ENCODE measurements at regions of chr3 and their contacts with region 1.

Region 1: DNA sequence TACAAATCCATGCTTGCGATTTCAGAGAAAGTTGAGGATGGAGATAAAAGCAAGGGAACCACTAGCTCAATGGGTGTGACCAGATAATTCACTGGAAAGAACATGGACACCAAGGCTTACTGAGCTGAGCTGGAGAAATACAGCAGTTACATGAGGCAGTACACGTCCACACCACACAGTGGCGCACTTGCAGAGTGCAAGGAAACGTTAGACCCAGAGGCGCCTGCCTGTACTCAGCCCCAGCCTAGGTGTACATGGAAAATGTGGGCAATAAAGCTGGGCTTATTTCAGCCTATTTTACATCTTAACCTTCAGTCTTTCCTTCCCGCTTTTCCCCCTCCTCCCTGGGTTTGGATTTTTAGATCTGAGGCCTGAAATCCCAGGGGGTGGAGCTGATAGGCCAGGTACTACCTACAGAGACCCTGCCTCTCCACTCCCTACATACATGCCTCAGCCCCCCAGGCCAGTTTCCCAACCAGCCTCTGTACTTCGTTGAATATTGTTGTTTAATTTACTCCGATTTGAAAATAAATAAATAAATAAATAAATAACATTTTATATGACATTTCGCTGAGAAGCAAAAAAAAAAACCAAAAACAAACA is 60.1 kb downstream of the PCOLCE2 start:
- DNase-seq: peak; percentile 85
- H3K4me3 Mint-ChIP-seq: no peak overlapping the region
- H3K27ac Mint-ChIP-seq: no peak overlapping the region
- H3K4me1 Mint-ChIP-seq: no peaks in the 10 kb centered on the region
- H3K27me3 Mint-ChIP-seq: peaks cover 13% of the 10 kb centered on the region

Region 2: DNA sequence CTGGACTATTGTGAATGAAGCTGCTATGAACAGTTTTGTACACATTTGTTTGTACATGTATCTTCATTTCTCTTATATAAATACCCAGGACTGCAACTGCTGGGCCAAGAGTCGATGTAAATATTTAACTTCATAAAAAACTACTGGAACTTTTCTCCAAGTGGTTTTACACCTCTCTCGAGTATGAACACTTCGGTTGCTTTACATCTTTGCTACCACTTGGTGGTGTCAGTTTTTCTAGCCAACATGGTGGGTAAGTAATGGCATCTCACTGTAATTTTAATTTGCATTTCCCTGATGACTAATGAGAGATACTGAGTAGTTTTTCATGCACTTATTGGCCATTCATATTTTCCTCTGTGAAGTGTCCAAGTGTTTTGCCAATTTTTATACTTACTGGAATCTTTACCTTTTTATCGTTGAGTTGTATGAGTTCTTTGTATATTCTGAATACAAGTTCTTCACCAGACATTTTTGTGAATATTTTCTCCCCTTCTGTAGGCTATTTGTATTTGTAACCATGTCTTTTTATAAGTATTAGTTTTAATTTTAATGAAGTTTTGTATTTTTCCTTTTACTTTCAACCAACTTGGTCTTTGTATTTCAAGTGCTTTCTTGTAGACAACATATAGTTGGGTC is 15.7 kb after region 1 on chr3:
- CTCF ChIA-PET with region 1: interaction called, 15 read pairs
- POLR2A ChIA-PET with region 1: no interaction called
- intact Hi-C with region 1: no loop called
- DNase-seq: no peak
- H3K4me3 Mint-ChIP-seq: no peak overlapping the region
- H3K27ac Mint-ChIP-seq: no peak overlapping the region
- H3K4me1 Mint-ChIP-seq: no peaks in the 10 kb centered on the region
- H3K27me3 Mint-ChIP-seq: peaks cover 4% of the 10 kb centered on the region

Region 3: GRCh38 chr3:142857056-142857455 is 28.3 kb after region 1 on chr3:
- CTCF ChIA-PET with region 1: interaction called, 15 read pairs
- POLR2A ChIA-PET with region 1: interaction called, 3 read pairs
- intact Hi-C with region 1: no loop called
- DNase-seq: no peak
- H3K4me3 Mint-ChIP-seq: no peak overlapping the region
- H3K27ac Mint-ChIP-seq: no peak overlapping the region
- H3K4me1 Mint-ChIP-seq: no peaks in the 10 kb centered on the region
- H3K27me3 Mint-ChIP-seq: peaks cover 16% of the 10 kb centered on the region

Region 4: GRCh38 chr3:142987080-142987700 is 158.4 kb after region 1 on chr3:
- CTCF ChIA-PET with region 1: interaction called, 27 read pairs
- POLR2A ChIA-PET with region 1: no interaction called
- intact Hi-C with region 1: loop called (anchors 1 kb)
- DNase-seq: no peak
- H3K4me3 Mint-ChIP-seq: no peak overlapping the region
- H3K27ac Mint-ChIP-seq: no peak overlapping the region
- H3K4me1 Mint-ChIP-seq: no peaks in the 10 kb centered on the region
- H3K27me3 Mint-ChIP-seq: peaks cover 10% of the 10 kb centered on the region

Region 5: DNA sequence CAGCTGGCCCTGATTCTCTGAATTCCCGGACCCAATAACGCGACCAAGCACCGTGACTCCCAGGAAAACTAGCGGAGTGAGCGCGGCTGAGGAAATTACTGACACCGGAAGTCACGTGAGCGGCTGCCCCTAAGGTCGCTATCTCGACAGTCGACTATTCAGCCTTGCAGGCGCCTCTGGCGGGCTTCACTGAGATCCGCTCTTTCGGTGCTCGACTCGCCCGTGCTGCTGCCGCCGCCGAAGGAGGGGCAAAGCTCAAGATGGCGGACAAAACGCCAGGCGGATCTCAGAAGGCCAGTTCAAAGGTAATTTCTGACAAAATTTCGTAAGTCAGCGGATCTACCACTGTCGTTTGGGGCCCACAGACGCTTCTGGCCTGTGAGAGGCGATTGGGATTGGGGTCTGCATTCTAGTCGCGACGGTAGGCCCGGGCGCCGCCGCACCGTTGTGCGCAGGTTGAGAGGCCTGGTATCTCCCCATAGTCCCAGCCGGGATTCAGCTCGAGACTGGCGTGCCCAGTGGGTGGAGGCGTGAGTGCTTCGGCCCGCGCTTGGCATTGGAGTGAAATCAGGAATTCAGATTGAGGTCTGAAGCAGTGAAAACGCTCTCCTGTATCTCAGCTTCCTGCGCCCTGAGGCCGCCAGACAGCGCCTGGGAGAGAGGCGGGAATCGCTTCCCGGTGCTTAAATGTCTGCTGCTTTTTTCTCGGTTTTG is 172.7 kb after region 1 on chr3 and contains the start of gene U2SURP:
- CTCF ChIA-PET with region 1: interaction called, 15 read pairs
- POLR2A ChIA-PET with region 1: interaction called, 3 read pairs
- intact Hi-C with region 1: no loop called
- DNase-seq: peak; percentile 95
- H3K4me3 Mint-ChIP-seq: peak within 1 kb of the TSS; percentile 88
- H3K27ac Mint-ChIP-seq: peak within 1 kb of the TSS; percentile 96
- H3K4me1 Mint-ChIP-seq: peaks cover 34% of the 10 kb centered on the region
- H3K27me3 Mint-ChIP-seq: no peaks in the 10 kb centered on the region
- total RNA-seq, gene U2SURP: 178 to 182 TPM

Measured in activated CD4-positive, alpha-beta memory T cell treated with anti-CD3 and anti-CD28 coated beads for 36 hours (primary cell).